K562 (cell line): ENCODE measurements at regions of chr16 and their contacts with region 1.

Region 1: GRCh38 chr16:88491560-88492310 is 38.7 kb downstream of the ZFPM1 start:
- DNase-seq: peak; percentile 86 to 97 (median 88)
- ATAC-seq: peak; percentile 78
- H3K4me3 ChIP-seq: no peak overlapping the region
- H3K27ac ChIP-seq: peak overlapping the region; percentile 76; the same call in 2 of the 3 replicates
- H3K4me1 ChIP-seq: peaks cover 63 to 100% of the 10 kb centered on the region in 2 experiments
- H3K27me3 ChIP-seq: no peaks in the 10 kb centered on the region
- CTCF ChIP-seq: no peak
- EP300 ChIP-seq: peak; percentile 98
- POLR2A ChIP-seq: no peak; the same call in 1 of the 2 replicates
- RAD21 ChIP-seq: no peak

Region 2: DNA sequence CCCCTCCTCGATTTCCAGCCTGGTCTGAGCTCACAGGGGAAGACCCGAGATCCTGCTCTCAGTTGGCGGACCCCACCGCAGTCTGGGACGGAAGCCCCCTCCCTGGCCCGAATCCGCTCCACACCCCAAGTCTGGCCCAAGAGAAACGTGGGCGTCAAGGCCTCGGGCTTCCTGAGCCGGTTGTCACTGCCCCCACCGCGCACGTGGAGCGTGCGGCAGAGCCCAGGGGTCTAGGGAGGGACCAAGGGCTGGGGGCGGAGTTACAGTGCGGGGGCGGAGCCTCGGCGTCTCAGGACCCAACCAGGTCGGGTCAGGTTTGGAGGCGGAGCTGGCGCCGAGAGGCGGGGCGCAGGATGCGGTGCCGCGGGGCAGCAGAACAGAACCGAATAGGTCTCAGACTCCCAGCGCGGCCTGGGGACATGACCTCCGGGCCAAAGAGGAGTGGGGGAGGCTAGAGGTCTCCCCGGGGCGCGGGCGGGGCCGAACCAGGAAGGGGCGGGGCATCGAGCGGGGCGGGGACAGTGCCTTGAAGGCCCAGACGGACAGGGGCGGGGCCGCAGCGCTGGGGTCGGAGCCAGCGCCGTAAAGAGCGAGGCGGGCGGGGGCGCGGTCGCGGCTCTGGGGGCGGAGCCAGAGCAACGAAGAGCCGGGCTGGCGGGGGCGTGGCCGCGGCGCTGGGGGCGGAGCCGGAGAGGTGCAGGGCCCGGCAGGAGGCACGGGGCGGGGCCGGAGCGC is 39.1 kb before region 1 on chr16:
- CTCF ChIA-PET with region 1: no interaction called
- POLR2A ChIA-PET with region 1: interaction called, 3 read pairs
- in situ Hi-C with region 1: no loop called
- intact Hi-C with region 1: loop called (anchors 2 kb)
- DNase-seq: peak; percentile 96 to 99 (median 97)
- ATAC-seq: peak; percentile 87
- H3K4me3 ChIP-seq: peak overlapping the region; percentile 55
- H3K27ac ChIP-seq: peak overlapping the region; percentile 90
- H3K4me1 ChIP-seq: peaks cover 48 to 85% of the 10 kb centered on the region in 2 experiments
- H3K27me3 ChIP-seq: no peaks in the 10 kb centered on the region
- CTCF ChIP-seq: no peak
- EP300 ChIP-seq: no peak
- POLR2A ChIP-seq: peak; percentile 75
- RAD21 ChIP-seq: no peak

Region 3: DNA sequence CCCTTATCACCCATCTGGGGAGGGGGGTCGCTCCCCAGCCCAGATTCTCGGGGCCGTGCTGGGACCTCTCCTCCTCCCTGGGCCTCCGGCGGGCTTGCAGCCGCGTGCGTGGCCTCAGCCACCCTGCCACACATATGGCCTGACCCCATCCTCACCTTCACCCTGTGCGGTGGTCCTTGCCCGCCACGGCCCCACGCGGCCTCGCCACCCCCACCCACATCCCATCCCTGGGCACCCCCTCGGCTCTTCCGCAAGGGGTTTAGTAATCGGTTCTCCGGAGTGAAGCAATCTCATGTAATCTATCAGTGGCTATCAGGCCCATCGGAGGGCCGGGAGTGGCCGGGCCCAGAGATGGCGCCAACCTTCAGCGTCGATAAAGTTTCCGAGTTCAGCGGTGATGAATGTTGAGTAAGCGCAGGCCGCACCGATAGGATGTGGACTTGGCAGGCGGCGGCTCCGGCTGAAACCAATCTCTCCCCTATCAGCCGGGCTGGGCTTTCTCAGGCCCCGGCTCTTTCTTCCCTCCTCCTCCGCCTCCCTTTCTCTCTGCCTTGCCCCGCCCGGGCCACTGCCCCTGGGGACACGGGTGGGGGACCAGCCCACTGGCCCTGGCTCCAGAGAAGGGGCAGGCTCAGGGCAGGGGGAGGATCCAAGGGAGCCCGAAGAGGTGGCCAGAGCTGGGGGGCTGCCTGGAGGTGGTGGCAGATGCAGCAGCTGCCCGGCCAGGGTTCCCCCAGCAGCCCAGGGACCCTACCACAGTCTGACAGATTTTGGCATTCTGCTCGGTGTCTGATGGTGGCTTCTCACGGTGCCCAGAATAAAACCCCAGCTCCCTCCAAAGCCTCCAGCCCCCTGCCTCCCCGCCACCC is 17.8 kb before region 1 on chr16:
- CTCF ChIA-PET with region 1: no interaction called
- POLR2A ChIA-PET with region 1: interaction called, 5 read pairs
- in situ Hi-C with region 1: no loop called
- intact Hi-C with region 1: loop called (anchors 2 kb)
- DNase-seq: peak; percentile 76 to 90 (median 82)
- ATAC-seq: peak; percentile 90
- H3K4me3 ChIP-seq: no peak overlapping the region
- H3K27ac ChIP-seq: peak overlapping the region; percentile 68; the same call in 2 of the 3 replicates
- H3K4me1 ChIP-seq: peaks cover 31 to 98% of the 10 kb centered on the region in 2 experiments; a peak in 4 of 5 replicates
- H3K27me3 ChIP-seq: no peaks in the 10 kb centered on the region
- CTCF ChIP-seq: no peak
- EP300 ChIP-seq: peak; percentile 71
- POLR2A ChIP-seq: no peak
- RAD21 ChIP-seq: peak; percentile 13 to 29; a peak in 2 of 4 replicates